ENCODE measurements at regions of chr3 and their contacts with region 1.

Region 1: GRCh38 chr3:135965506-135966270 is at the start of gene PPP2R3A:
- DNase-seq: peak; percentile 89
- ATAC-seq: peak; percentile 96
- total RNA-seq, gene PPP2R3A: 105 TPM

Region 2: GRCh38 chr3:136018876-136019275 is 53.2 kb after region 1 on chr3:
- intact Hi-C with region 1: loop called (anchors 5 kb)
- DNase-seq: no peak
- ATAC-seq: peak; percentile 32

Measured in left ventricle myocardium superior (tissue), 1 donor.